ENCODE measurements at regions of chr17 and their contacts with region 1.

Region 1: DNA sequence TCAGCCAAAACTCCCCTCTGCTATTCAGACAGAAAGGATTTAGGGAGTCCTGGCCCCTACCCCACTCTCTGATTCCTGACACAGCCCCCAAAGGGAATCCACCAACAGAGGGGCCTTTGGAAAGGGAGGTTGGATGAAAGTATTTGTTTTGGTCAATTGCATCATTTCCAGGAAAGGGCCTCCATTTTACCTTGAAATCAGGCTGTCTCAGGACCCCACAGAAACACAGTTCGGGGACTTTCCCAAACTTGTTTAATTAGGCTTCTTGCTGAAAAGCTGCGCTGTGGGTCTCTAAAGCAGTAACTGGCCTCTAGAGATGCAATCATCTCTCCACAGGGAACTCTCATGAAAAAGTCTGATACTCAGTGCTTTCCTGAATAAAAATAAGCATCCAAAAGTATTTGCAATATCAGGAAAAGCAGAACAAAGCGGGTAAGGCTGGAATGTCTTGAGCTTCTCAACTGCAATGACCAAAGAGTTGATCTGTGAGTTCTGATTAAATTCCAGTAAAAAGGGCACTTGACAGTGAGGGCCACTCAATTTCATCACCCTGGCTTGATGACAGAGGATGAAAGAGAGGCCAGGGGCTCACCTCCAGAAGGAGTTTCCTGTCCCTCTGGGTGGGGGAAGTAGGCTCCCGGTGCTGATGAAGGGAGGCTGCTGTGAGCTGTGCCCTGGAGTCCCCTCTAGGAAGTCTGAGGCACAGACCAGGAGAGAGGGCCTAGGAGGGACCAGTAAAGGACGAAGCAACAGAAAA is 36.3 kb downstream of the LYRM9 start:
- DNase-seq: no peak

Region 2: GRCh38 chr17:27793168-27793905 is 63.5 kb before region 1 on chr17:
- intact Hi-C with region 1: loop called in 1 of 2 experiments (anchors 10 kb)
- DNase-seq: no peak

Measured in posterior vena cava (tissue), 2 donors.